Left ventricle myocardium superior (tissue), 1 donor: ENCODE measurements at regions of chr2 and their contacts with region 1.

Region 1: GRCh38 chr2:237235383-237236095 is 149.8 kb downstream of the COPS8 start:
- DNase-seq: peak; percentile 61
- ATAC-seq: peak; percentile 95

Region 2: GRCh38 chr2:237315170-237315828 is 79.8 kb after region 1 on chr2:
- intact Hi-C with region 1: loop called (anchors 10 kb)
- DNase-seq: peak; percentile 95
- ATAC-seq: peak; percentile 96